Prostate gland (tissue), 2 donors: ENCODE measurements at regions of chr12 and their contacts with region 1.

Region 1: DNA sequence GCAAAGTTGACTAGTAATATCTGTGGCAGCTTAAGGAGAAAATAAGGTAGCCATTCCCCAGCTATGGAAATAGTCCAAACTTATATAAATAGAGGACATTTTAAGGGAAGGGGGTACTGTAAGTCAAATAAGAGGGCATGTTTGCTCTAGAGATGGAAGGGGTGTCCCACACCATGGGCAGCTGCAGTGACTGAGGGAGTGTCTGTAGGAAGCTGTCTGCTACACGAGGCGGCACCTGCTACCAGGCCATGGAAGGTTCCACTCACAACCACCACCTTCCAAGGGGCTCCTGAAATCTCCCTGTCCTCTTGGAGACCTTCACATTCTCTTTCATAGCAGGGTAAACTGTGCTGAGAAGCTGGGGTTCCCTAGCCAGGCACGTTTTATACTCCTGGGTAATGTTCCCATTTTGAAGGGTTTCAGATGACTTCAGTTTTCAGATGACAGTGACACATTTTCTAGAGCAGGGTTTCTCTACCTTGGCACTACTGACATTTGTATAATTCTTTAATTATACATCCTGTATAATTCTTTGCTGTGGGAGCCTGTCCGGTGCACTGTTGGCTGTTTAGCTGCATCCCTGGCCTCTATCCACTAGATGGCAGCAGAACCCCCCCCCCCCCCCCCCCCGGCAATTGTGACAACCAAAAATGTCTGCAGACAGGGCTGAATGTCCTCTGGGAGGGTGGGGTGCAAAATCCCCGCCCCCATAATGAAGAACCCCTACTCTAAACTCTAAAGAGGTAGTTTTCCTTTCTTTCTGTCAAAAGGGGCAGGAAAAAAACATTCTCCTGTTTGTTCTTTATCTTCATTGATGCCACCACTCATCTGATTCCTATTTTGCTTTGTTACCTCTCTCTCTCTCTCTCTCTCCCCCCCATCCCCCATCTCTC is 11.6 kb upstream of the SMCO2 start:
- DNase-seq: peak; percentile 4
- H3K4me3 ChIP-seq: no peak overlapping the region
- H3K27ac ChIP-seq: no peak overlapping the region
- H3K4me1 ChIP-seq: no peaks in the 10 kb centered on the region
- H3K27me3 ChIP-seq: no peaks in the 10 kb centered on the region
- CTCF ChIP-seq: peak in 2 of 4 experiments; percentile 24 to 64
- POLR2A ChIP-seq: no peak

Region 2: DNA sequence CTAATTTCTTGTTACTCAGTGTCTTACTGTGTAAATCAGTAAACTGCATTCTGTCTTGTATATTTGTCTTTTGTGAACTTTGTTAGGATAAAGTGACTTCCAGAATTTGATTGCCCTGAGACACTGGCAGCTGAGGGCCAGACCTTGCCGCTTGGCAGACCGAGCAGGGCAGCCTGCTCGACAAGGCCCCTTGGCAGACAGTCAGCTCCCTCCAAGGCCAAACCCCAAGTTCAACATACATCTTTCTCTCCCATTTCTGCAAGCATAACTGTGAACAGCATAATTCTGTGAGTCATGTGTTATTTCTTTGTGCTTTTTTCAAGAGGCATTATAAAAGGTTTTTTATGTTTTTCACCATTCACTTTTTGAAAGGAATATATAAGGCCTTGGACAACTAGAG is 141.5 kb before region 1 on chr12:
- intact Hi-C with region 1: no loop called
- DNase-seq: peak; percentile 49
- H3K4me3 ChIP-seq: no peak overlapping the region
- H3K27ac ChIP-seq: no peak overlapping the region
- H3K4me1 ChIP-seq: no peaks in the 10 kb centered on the region
- H3K27me3 ChIP-seq: no peaks in the 10 kb centered on the region
- CTCF ChIP-seq: no peak
- POLR2A ChIP-seq: no peak

Region 3: DNA sequence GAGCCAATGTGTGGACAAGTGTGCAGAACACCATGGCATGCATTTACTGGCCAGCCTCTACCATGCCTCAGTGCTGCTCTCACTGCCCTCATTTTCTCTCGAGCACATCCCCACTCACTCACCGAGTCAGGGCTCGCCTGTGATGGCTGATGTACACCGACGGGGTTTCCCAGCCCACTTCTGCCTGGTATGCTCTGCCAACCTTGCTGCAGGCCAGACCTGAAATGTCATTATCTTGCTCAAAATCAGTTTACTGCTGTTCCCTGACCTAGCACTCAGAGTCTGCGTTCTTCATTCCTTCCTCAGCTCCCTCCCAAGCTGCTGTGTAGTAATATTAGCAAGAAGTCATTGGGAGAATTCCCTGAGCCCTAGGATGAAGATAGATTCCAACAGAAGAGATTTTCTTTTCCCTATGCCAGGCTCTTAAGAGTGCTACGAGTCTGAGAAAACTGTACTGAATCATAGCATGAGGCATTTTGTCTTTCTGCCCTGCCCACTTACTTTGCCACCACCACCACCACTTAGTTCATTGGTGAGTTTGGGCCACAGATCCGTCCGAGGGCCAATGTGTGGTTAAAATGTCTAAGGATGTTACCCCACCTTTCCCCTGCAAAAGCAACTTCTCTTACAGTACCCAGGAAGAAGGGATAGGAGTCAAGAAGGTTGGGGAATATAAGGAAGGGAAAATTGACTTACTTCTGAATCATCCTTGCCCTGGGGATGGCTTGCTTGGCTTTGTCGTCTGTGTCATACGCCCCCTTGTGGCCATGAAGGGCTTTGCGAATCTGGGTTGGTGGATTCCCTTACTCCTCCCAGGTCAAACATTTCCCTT is 51.3 kb before region 1 on chr12:
- intact Hi-C with region 1: no loop called
- DNase-seq: peak; percentile 38
- H3K4me3 ChIP-seq: no peak overlapping the region
- H3K27ac ChIP-seq: no peak overlapping the region
- H3K4me1 ChIP-seq: no peaks in the 10 kb centered on the region
- H3K27me3 ChIP-seq: no peaks in the 10 kb centered on the region
- CTCF ChIP-seq: peak; percentile 41 to 79 (median 61)
- POLR2A ChIP-seq: no peak

Region 4: DNA sequence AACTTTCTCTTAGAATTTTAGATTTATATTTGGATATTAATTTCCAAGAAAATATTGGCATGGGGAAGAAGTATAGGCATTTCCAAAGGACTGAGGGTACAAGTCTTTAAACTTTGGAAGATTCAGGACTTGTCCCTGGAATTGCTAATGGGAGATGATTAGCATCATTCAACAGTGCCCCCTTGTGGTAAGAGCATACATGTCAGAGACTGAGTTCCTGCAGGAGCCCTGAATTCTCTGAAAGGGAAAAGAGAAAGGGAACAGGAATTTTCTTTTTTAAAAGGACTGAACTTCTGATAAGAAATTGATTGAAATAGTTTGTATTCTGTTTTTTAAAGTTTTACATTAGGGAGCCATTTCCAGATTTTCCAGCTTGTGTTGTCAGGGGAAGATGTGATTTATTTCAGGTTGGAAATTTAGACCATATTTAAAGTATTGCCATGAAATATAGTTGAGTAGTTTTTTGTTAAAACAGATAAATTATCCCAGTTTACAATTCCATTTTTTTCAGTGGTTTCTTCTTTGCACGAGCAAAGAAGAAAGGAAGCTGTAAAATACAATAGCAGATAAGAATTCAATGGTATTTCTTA is 217.3 kb after region 1 on chr12:
- intact Hi-C with region 1: loop called (anchors 5 kb)
- DNase-seq: peak; percentile 78
- H3K4me3 ChIP-seq: no peak overlapping the region
- H3K27ac ChIP-seq: no peak overlapping the region
- H3K4me1 ChIP-seq: no peaks in the 10 kb centered on the region
- H3K27me3 ChIP-seq: no peaks in the 10 kb centered on the region
- CTCF ChIP-seq: peak; percentile 63 to 88 (median 80)
- POLR2A ChIP-seq: no peak